MCF 10A (cell line): ENCODE measurements at regions of chr7 and their contacts with region 1.

Region 1: DNA sequence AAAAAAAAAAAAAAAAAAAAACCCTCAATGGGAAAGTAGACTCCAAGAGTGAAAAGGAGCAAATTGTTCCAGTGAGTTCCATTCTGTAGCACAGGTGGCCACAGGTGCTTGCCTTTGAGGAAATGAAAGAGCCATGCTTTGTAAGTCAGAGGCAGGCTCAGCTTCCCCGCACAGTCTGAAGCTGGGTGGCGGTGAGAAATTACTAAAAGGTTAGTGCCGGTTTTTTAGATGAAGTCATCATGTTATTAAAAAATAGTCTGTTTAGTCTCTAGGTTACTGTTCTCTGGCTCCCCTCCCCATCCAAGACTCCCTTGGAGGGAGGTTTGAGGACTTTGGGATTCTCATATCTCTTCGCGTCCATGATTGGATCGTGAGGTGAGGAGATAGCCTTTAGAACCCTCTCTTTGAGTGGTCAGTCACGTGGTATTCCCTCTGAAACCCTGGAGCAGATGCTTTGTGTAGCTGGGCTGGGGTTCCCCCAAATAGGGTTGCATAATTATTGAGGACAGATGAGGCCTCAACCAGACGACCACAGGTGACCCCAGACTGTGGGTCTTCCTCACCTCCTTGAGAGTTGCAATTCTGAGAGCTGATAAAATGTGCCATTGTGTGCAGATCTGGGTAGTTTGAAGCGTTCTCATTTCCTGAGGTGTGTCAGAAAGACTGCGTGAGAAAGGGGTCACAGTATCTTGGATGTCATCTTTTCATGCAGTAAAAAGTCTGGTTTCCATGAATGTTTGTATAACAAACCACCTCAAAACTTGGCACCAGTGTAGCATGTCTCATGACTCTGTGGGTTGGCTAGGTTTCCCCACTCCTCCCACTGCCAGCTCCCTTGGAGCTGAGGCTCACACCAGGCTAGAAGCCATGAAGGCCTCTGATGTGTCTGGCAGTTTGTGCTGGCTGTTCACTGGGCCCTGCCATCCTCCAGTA is 27.1 kb downstream of the OGDH start:
- DNase-seq: peak; percentile 92
- H3K4me3 Mint-ChIP-seq: no peak overlapping the region
- H3K27ac Mint-ChIP-seq: peak overlapping the region; percentile 84
- H3K4me1 Mint-ChIP-seq: peaks cover 40% of the 10 kb centered on the region
- H3K27me3 Mint-ChIP-seq: no peaks in the 10 kb centered on the region
- CTCF ChIP-seq: no peak

Region 2: GRCh38 chr7:44581879-44582603 is 51.5 kb before region 1 on chr7 and contains the start of gene TMED4:
- CTCF ChIA-PET with region 1: no interaction called
- POLR2A ChIA-PET with region 1: interaction called, 24 read pairs
- intact Hi-C with region 1: no loop called
- DNase-seq: peak; percentile 99
- H3K4me3 Mint-ChIP-seq: peak within 1 kb of the TSS; percentile 85
- H3K27ac Mint-ChIP-seq: peak within 1 kb of the TSS; percentile 93
- H3K4me1 Mint-ChIP-seq: peaks cover 6% of the 10 kb centered on the region
- H3K27me3 Mint-ChIP-seq: no peaks in the 10 kb centered on the region
- CTCF ChIP-seq: no peak
- total RNA-seq, gene TMED4: 49.7 and 58.0 TPM in 2 replicates

Region 3: GRCh38 chr7:44622307-44623151 is 11.0 kb before region 1 on chr7:
- CTCF ChIA-PET with region 1: interaction called, 4 read pairs
- POLR2A ChIA-PET with region 1: interaction called, 19 read pairs
- intact Hi-C with region 1: no loop called
- DNase-seq: no peak
- H3K4me3 Mint-ChIP-seq: no peak overlapping the region
- H3K27ac Mint-ChIP-seq: no peak overlapping the region
- H3K4me1 Mint-ChIP-seq: peaks cover 26% of the 10 kb centered on the region
- H3K27me3 Mint-ChIP-seq: no peaks in the 10 kb centered on the region
- CTCF ChIP-seq: no peak

Region 4: DNA sequence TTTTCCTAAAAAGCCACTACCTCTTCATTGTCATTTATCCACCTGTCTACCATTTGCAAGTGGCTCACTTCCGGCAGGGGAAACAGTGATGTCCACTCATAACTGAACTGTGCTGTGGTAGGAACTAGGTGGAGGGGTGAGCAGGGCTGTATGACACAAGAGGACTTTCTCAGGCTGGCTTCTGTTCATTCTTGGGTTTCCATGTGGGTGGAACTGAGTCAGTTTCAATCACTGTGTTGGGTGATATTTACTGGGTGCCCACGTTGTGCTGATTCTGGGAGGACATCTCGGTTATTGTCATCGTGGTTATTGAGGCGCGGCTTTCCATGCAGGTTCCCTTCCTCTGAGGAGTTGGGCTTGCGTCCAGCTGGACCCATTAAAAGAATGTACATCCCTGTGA is 562.9 kb after region 1 on chr7:
- CTCF ChIA-PET with region 1: no interaction called
- POLR2A ChIA-PET with region 1: no interaction called
- intact Hi-C with region 1: no loop called
- DNase-seq: no peak
- H3K4me3 Mint-ChIP-seq: no peak overlapping the region
- H3K27ac Mint-ChIP-seq: no peak overlapping the region
- H3K4me1 Mint-ChIP-seq: no peaks in the 10 kb centered on the region
- H3K27me3 Mint-ChIP-seq: peaks cover 78% of the 10 kb centered on the region
- CTCF ChIP-seq: no peak